AG04450 (cell line): ENCODE measurements at regions of chr5 and their contacts with region 1.

Region 1: DNA sequence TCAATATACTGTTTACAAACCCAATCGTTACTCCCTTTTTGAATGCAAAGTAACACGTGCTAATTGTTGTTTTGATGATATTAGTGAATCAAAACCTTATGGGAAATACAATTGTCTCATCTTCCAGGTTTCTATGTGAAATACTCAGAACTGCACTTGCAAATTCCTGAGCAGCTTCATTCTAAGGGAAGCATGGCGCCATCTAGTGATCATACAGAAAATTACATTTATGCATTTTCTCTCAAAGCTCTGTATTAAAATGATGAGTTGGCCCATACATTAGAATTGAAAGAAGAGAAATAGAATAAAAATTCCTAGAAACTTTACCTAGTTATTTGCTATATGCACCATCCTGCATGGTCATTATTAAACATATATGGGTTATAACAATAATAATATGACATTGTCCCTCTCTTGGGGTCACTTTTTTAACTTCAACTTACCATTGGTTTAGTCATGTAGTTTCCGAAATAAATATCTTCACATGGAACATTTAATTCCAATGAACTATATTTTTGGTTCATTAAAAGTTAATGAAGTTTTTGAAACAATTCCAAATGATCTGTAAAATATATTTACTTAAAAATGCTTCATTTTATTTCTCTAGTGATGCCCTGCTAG is 220.0 kb downstream of the PDE4D start:
- DNase-seq: no peak
- H3K4me3 ChIP-seq: no peak overlapping the region
- H3K27ac ChIP-seq: no peak overlapping the region
- H3K27me3 ChIP-seq: no peaks in the 10 kb centered on the region
- CTCF ChIP-seq: peak; percentile 80

Region 2: DNA sequence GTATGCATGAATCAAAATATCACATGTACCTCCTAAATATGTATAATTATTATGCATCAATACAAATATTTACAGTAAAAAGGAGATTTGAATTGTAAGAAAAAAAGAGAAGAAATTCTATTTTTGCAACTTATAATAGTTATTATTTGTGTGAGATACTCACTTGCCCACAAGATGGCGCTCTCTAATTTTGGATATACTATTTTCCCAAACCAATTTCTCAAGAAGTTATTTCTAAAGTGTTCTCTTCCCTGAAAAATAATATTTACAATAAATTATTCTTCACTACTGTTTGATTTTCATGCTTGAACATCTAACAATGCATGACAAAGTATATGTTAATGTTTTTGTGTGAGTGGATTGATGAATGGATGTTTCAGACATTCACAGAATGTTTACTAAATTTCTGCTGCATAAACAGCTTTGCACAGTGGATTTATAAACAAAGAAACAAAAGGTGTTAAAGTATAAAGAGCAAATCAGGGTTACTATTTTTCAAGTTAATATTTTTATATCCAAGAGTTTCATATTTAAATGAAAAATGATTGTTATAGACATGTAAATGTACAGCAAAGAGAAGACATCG is 283.4 kb before region 1 on chr5:
- CTCF ChIA-PET with region 1: interaction called, 24 read pairs
- POLR2A ChIA-PET with region 1: no interaction called
- DNase-seq: no peak
- H3K4me3 ChIP-seq: no peak overlapping the region
- H3K27ac ChIP-seq: no peak overlapping the region
- H3K27me3 ChIP-seq: no peaks in the 10 kb centered on the region
- CTCF ChIP-seq: peak; percentile 67

Region 3: GRCh38 chr5:59506285-59506877 is 167.2 kb before region 1 on chr5:
- CTCF ChIA-PET with region 1: interaction called, 92 read pairs
- POLR2A ChIA-PET with region 1: no interaction called
- DNase-seq: no peak
- H3K4me3 ChIP-seq: no peak overlapping the region
- H3K27ac ChIP-seq: no peak overlapping the region
- H3K27me3 ChIP-seq: no peaks in the 10 kb centered on the region
- CTCF ChIP-seq: peak; percentile 46

Region 4: GRCh38 chr5:59598547-59598874 is 75.0 kb before region 1 on chr5:
- CTCF ChIA-PET with region 1: no interaction called
- POLR2A ChIA-PET with region 1: no interaction called
- DNase-seq: no peak
- H3K4me3 ChIP-seq: no peak overlapping the region
- H3K27ac ChIP-seq: no peak overlapping the region
- H3K27me3 ChIP-seq: no peaks in the 10 kb centered on the region
- CTCF ChIP-seq: no peak

Region 5: DNA sequence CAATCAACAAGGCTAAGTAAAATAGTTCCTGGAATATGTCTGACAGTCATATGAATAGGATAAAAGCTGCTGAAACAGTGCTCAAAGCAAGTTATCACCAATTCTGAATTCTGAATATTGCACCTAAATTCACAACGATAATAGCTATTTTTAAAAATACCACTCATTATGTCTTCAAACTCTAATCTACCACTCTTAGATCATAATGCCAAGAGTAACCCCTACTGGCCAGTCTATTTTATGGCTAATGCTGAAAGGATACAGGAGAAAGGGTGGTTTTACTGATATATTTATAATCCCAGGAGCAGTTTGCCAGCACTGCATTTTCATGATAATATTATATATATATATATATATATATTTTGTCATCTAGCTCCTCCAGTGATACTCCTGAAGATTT is 12.8 kb before region 1 on chr5:
- CTCF ChIA-PET with region 1: interaction called, 26 read pairs
- POLR2A ChIA-PET with region 1: no interaction called
- DNase-seq: no peak
- H3K4me3 ChIP-seq: no peak overlapping the region
- H3K27ac ChIP-seq: no peak overlapping the region
- H3K27me3 ChIP-seq: no peaks in the 10 kb centered on the region
- CTCF ChIP-seq: peak; percentile 45

Region 6: GRCh38 chr5:59698207-59699178 is 24.9 kb after region 1 on chr5:
- CTCF ChIA-PET with region 1: interaction called, 14 read pairs
- POLR2A ChIA-PET with region 1: no interaction called
- DNase-seq: no peak
- H3K4me3 ChIP-seq: no peak overlapping the region
- H3K27ac ChIP-seq: no peak overlapping the region
- H3K27me3 ChIP-seq: no peaks in the 10 kb centered on the region
- CTCF ChIP-seq: no peak

Region 7: DNA sequence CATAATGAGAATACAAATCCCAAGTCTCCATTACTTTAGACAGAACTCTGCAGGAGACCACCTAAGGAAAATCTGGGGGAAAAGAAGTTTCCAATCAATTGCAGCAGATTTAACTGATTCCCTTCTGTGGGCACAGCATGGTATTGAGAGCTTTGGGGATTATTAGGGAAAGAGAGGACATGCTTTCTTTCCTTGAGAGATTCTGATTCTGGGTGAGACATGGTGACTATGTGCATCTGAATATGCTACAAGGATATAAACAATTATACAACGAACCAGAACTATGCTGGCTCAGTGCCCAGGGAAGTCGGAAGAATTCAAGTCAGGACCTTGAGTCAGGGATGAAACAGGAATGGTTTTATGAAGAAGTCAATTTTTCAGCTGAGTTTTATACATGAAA is 36.3 kb after region 1 on chr5:
- CTCF ChIA-PET with region 1: interaction called, 11 read pairs
- POLR2A ChIA-PET with region 1: no interaction called
- DNase-seq: peak; percentile 34
- H3K4me3 ChIP-seq: no peak overlapping the region
- H3K27ac ChIP-seq: no peak overlapping the region
- H3K27me3 ChIP-seq: no peaks in the 10 kb centered on the region
- CTCF ChIP-seq: no peak